RWPE1 (cell line): ENCODE measurements at regions of chr15 and their contacts with region 1.

Region 1: GRCh38 chr15:86231864-86232721 is 152.4 kb downstream of the AGBL1 start:
- DNase-seq: peak; percentile 57
- H3K27ac ChIP-seq: no peak overlapping the region
- CTCF ChIP-seq: peak; percentile 74

Region 2: GRCh38 chr15:86101818-86102217 is 130.3 kb before region 1 on chr15:
- CTCF ChIA-PET with region 1: no interaction called
- POLR2A ChIA-PET with region 1: no interaction called
- DNase-seq: no peak
- H3K27ac ChIP-seq: no peak overlapping the region
- CTCF ChIP-seq: no peak

Region 3: DNA sequence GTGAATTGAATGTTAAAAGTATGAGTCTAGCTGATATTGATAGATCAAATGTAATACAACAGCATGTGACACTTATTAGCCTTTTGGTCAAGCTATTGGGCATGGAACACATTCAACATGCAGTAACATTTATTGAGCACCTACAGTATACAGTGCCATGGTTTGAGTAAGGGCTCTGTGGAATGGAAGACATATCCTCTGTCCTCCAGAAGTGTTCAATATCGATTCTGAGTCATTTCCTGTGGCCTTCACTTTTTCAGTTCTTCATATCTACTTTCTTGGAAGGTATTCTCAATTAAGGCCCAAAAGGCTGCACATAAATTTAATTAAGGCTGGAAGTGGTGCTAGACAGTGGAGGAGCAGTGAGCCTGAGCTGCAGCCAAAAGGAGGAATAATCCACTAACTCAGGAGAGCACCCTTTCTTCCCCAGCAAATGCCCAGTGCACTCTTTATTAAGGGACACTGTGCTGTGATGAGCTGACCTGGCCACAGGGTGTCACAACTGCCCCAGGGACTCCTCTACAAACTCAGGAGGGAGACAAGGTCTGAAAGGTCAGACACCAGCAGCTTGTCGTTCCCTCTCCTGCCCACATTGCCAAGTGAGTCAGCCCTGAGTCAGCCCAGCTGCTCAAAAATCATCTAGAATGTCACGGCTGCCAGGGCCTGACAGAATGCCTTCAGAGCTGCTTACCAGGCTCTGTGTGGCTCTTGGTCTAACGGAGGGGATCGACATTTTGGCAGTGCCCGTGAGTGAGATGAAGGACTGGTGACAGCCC is 392.4 kb after region 1 on chr15:
- CTCF ChIA-PET with region 1: interaction called, 10 read pairs
- POLR2A ChIA-PET with region 1: no interaction called
- DNase-seq: peak; percentile 97
- H3K27ac ChIP-seq: peak overlapping the region; percentile 70
- CTCF ChIP-seq: peak; percentile 91